Head of caudate nucleus (tissue), 42 donors: ENCODE measurements at regions of chr1 and their contacts with region 1.

Region 1: GRCh38 chr1:25042331-25043227 is 112.5 kb upstream of the RUNX3 start:
- DNase-seq: no peak

Region 2: DNA sequence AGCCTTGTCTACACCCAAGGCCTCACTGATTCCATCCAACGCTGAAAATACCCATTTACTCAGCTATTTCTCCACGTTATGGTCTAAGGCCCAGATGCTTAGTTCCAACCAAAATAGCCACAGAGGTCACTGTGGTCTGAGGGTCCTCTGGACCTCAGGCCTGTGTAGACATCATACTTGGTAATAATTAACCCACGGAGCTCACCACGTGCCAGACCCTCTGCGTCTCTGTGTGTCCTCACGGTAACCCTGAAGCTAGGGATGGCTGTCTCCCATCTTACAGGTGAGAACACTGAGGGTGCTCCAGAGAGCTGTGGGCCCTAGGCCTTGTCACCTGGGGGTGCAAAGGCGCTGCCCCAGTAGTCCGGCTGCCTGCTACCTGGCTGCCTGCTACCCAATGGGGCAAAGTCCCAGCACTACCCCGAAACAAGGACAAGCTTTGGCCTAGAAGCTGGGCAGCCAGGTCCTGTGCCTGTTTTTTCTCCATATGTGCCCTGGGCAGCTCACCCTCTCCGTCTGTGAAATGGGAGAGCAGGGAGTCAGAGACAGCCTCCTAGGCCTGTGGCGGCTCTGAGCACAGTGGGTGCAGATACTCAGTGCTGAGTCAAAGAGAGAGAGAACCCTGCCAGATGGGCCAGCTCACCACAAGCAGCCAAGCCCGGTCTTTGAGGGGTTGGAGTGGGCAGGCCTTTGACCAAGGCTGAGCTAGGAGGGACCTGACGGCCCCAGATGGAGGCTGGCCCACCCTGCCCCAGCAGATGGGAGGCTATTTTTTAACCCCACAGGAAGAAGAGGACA is 95.5 kb before region 1 on chr1:
- intact Hi-C with region 1: loop called (anchors 10 kb)
- DNase-seq: no peak

Region 3: GRCh38 chr1:24987875-24988557 is 54.6 kb before region 1 on chr1:
- intact Hi-C with region 1: no loop called
- DNase-seq: no peak